Activated B cell treated with CpG ODN at 0.5 μM for 24 hours (primary cell): ENCODE measurements at regions of chr12 and their contacts with region 1.

Region 1: DNA sequence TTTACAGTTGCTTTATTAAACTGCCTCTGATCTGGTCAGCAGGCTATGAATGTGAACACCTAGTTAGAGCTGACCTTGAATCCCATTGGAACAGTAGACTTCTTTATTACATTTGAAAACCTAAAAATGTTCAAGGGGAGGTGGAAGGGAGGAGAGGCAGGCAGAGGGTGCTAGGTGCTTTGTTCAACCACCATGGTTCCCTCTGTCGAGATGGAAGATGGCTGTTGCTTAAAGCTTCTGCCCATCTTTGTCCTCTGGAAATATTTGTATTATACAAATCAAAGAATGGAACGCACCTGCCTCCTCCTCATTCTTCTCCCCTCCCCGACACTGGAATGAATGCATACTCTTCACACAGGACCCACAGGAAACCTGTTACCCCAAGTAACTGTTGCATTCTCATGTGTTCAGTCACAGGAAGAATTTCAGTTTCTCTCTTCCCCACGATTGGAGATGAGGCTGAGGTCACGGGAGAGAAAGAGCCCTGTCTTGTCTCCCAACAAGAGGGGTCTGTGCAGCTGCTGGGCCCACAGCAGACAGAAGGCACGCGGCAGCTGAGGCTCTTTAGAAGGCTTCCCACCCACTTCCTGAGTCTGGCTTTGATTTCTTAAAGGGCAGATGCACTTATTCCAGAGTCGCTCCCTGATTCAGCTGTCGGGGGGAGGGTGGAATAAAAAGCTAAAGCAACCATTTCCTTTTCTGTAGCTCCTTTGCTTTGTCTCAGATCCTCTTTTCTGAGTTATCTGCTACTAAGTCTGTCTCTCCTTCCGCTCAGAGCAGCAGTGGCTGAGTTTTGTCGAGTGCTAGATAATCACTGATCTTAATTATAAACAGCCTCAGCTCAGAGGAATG is 217.9 kb upstream of the BTG1 start:
- DNase-seq: peak; percentile 50
- ATAC-seq: peak; percentile 75
- H3K4me3 Mint-ChIP-seq: peak overlapping the region; percentile 88
- H3K27ac Mint-ChIP-seq: peak overlapping the region; percentile 98
- H3K4me1 Mint-ChIP-seq: peaks cover 76% of the 10 kb centered on the region
- H3K27me3 Mint-ChIP-seq: no peaks in the 10 kb centered on the region
- CTCF ChIP-seq: no peak

Region 2: DNA sequence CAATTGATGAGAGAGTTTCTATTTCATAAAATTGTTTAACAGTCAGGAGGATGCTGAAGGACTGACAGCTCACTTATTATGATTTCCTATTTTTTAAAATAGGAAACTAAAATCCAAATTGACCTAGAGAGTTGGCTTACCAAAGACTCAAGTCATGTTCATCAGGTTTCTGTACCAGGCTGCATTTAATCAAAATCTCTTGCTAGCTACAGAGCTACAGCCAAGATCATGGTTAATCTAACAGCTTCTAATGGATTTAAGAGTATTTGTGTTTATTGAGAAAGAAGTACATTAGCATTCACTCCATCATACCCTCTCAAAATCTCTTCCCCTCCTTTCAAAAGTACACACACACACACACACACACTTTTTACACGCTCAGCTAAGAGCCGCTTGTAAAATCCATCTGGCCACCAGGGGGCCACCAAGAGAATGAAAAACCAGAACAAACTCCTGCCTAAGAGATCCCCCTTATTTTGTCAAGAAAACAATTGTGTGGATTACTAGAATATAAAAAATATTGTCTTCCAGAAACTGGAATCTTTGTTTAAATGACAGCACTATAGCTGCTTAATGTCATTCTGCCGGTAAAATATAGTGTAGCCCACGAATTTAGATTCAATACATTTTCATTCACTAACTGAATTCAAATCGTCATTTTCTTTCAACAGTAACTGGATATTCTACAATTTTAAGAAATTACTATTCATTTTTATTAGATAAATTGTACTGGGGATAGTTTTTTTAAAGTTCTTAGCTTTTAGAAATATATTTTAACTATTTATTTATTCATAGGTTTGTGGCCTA is 551.8 kb before region 1 on chr12:
- CTCF ChIA-PET with region 1: interaction called, 11 read pairs
- POLR2A ChIA-PET with region 1: no interaction called
- intact Hi-C with region 1: no loop called
- DNase-seq: peak; percentile 57
- ATAC-seq: peak; percentile 71
- H3K4me3 Mint-ChIP-seq: no peak overlapping the region
- H3K27ac Mint-ChIP-seq: no peak overlapping the region
- H3K4me1 Mint-ChIP-seq: peaks cover 7% of the 10 kb centered on the region
- H3K27me3 Mint-ChIP-seq: no peaks in the 10 kb centered on the region
- CTCF ChIP-seq: no peak

Region 3: GRCh38 chr12:92158796-92159439 is 204.6 kb before region 1 on chr12:
- CTCF ChIA-PET with region 1: no interaction called
- POLR2A ChIA-PET with region 1: interaction called, 18 read pairs
- intact Hi-C with region 1: no loop called
- DNase-seq: no peak
- ATAC-seq: peak; percentile 65
- H3K4me3 Mint-ChIP-seq: peak overlapping the region; percentile 76
- H3K27ac Mint-ChIP-seq: peak overlapping the region; percentile 96
- H3K4me1 Mint-ChIP-seq: peaks cover 93% of the 10 kb centered on the region
- H3K27me3 Mint-ChIP-seq: no peaks in the 10 kb centered on the region
- CTCF ChIP-seq: no peak

Region 4: DNA sequence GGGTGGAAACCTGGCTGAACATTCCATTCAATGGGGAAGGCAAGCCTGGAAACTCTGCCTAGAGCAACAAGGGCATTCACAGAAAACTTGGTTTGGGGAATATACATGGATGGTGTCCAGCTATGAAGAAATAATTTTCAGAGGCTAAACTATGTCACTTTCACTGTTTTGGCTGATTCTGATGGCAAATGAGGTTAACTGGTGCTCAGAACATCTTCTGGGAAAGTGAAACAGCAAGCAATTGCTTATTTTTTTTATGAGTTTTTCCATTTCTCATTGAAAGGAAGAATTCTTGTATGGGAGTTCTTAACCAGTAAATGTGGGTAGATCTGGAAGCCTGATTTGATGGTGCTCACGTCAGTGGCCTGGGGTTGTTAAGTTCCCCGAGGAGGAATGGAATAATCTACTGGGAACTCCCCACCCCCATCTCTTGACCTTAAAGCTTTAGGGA is 85.1 kb before region 1 on chr12:
- CTCF ChIA-PET with region 1: no interaction called
- POLR2A ChIA-PET with region 1: no interaction called
- intact Hi-C with region 1: no loop called
- DNase-seq: no peak
- ATAC-seq: no peak
- H3K4me3 Mint-ChIP-seq: no peak overlapping the region
- H3K27ac Mint-ChIP-seq: no peak overlapping the region
- H3K4me1 Mint-ChIP-seq: no peaks in the 10 kb centered on the region
- H3K27me3 Mint-ChIP-seq: no peaks in the 10 kb centered on the region
- CTCF ChIP-seq: no peak

Region 5: GRCh38 chr12:92349635-92350034 is 13.9 kb before region 1 on chr12:
- CTCF ChIA-PET with region 1: no interaction called
- POLR2A ChIA-PET with region 1: interaction called, 11 read pairs
- intact Hi-C with region 1: no loop called
- DNase-seq: no peak
- ATAC-seq: no peak
- H3K4me3 Mint-ChIP-seq: no peak overlapping the region
- H3K27ac Mint-ChIP-seq: no peak overlapping the region
- H3K4me1 Mint-ChIP-seq: peaks cover 5% of the 10 kb centered on the region
- H3K27me3 Mint-ChIP-seq: no peaks in the 10 kb centered on the region
- CTCF ChIP-seq: no peak

Region 6: GRCh38 chr12:92408072-92408900 is 44.8 kb after region 1 on chr12:
- CTCF ChIA-PET with region 1: interaction called, 31 read pairs
- POLR2A ChIA-PET with region 1: interaction called, 74 read pairs
- intact Hi-C with region 1: loop called (anchors 1 kb)
- DNase-seq: no peak
- ATAC-seq: peak; percentile 42
- H3K4me3 Mint-ChIP-seq: peak overlapping the region; percentile 50
- H3K27ac Mint-ChIP-seq: peak overlapping the region; percentile 88
- H3K4me1 Mint-ChIP-seq: peaks cover 68% of the 10 kb centered on the region
- H3K27me3 Mint-ChIP-seq: no peaks in the 10 kb centered on the region
- CTCF ChIP-seq: no peak

Region 7: DNA sequence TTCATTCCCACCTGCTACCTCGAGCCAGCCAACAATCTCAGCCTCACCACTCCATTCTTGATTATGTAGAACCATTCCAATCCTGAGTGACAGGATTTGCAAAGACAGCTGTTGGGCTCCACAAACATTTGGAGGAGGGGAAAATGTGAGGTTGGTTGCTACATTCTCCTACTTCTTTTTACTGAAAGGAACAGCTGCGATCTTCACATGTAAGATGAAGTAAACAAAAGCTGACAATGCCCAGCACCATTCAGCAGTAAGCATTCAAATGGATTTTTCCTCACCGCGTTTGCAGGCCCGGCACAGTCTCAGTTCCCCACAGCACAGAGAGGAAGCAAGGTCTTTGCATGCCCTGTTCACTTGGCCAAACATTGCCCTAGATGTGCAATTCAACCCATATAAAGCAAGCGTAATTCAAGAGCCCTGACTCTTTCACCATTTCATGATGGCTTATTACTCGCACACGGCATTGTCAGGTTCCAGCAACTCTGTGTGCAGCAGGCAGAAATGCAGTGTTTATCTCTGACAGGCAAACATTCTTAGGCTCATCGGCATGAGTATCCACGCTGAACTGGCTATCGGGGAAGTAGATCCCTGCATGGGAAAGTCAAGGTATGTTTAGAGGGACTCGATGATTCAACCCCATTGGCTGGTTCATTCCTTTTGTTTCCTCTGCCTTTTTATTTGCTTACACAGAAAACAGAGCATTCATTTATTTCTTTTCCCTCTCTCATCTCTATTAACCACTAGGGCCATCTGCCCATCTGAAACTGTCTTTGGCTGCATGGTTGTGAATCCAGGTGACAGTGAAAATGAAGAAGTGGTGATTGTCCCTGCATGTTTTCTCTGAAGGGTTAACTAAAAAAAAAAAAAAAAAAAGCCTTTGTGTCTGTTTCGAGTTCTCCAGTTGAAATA is 103.1 kb after region 1 on chr12:
- CTCF ChIA-PET with region 1: interaction called, 3 read pairs
- POLR2A ChIA-PET with region 1: interaction called, 23 read pairs
- intact Hi-C with region 1: loop called (anchors 1 kb)
- DNase-seq: peak; percentile 51
- ATAC-seq: peak; percentile 74
- H3K4me3 Mint-ChIP-seq: peak overlapping the region; percentile 93
- H3K27ac Mint-ChIP-seq: peak overlapping the region; percentile 99
- H3K4me1 Mint-ChIP-seq: peaks cover 94% of the 10 kb centered on the region
- H3K27me3 Mint-ChIP-seq: no peaks in the 10 kb centered on the region
- CTCF ChIP-seq: no peak

Region 8: GRCh38 chr12:92556141-92556540 is 192.6 kb after region 1 on chr12:
- CTCF ChIA-PET with region 1: no interaction called
- POLR2A ChIA-PET with region 1: interaction called, 14 read pairs
- intact Hi-C with region 1: no loop called
- DNase-seq: no peak
- ATAC-seq: peak; percentile 33
- H3K4me3 Mint-ChIP-seq: peak overlapping the region; percentile 69
- H3K27ac Mint-ChIP-seq: peak overlapping the region; percentile 90
- H3K4me1 Mint-ChIP-seq: peaks cover 64% of the 10 kb centered on the region
- H3K27me3 Mint-ChIP-seq: no peaks in the 10 kb centered on the region
- CTCF ChIP-seq: no peak